ENCODE measurements at regions of chr6 and their contacts with region 1.

Region 1: GRCh38 chr6:139161817-139162284 is 27.0 kb downstream of the HECA start:
- DNase-seq: peak; percentile 91
- H3K4me3 Mint-ChIP-seq: peak overlapping the region; percentile 80
- H3K27ac Mint-ChIP-seq: peak overlapping the region; percentile 98
- H3K4me1 Mint-ChIP-seq: peaks cover 66% of the 10 kb centered on the region
- H3K27me3 Mint-ChIP-seq: no peaks in the 10 kb centered on the region

Region 2: DNA sequence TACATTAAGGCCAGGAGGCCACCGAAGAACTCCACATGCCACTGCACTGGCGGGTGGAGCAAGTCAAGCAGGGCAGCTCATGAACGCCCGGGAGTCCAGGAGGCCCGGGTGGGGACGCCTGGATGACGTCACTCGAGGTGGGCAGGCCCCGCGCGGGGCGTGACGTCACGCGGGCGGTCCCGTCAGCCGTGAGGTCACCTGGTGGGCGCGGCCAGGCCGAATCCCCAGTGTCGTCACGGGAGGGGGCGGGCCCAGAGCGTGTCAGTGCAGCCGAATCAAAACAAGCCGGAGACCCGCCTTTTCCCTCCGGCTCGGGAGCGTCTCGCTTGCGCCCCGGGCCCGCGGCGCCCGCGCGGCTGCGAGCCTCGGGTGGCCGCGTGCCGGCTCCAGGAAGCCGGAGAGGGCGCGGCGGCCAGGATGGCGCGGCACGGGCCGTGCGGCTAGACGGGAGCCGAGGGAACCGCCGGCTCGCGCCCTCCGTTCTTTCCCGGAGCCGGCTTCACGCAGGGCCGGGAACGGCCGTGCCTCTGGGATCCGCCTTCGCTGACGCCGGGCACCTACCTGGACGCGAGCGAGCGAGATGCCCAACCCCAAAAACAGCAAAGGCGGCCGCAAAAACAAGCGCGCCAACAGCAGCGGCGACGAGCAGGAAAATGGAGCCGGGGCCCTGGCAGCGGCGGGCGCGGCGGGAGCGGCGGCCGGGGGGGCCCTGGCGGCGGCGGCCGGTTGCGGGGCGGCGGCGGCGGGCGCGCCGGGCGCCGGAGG is 26.9 kb before region 1 on chr6 and contains the start of gene HECA:
- intact Hi-C with region 1: loop called (anchors 1 kb)
- DNase-seq: peak; percentile 100
- H3K4me3 Mint-ChIP-seq: peak within 1 kb of the TSS; percentile 98
- H3K27ac Mint-ChIP-seq: peak within 1 kb of the TSS; percentile 97
- H3K4me1 Mint-ChIP-seq: peaks cover 60% of the 10 kb centered on the region
- H3K27me3 Mint-ChIP-seq: no peaks in the 10 kb centered on the region
- total RNA-seq, gene HECA: 45.7 and 47.7 TPM in 2 replicates

Region 3: GRCh38 chr6:139146317-139146726 is 15.5 kb before region 1 on chr6:
- intact Hi-C with region 1: loop called (anchors 2 kb)
- DNase-seq: peak; percentile 76
- H3K4me3 Mint-ChIP-seq: peak overlapping the region; percentile 77
- H3K27ac Mint-ChIP-seq: peak overlapping the region; percentile 94
- H3K4me1 Mint-ChIP-seq: peaks cover 84% of the 10 kb centered on the region
- H3K27me3 Mint-ChIP-seq: no peaks in the 10 kb centered on the region

Region 4: DNA sequence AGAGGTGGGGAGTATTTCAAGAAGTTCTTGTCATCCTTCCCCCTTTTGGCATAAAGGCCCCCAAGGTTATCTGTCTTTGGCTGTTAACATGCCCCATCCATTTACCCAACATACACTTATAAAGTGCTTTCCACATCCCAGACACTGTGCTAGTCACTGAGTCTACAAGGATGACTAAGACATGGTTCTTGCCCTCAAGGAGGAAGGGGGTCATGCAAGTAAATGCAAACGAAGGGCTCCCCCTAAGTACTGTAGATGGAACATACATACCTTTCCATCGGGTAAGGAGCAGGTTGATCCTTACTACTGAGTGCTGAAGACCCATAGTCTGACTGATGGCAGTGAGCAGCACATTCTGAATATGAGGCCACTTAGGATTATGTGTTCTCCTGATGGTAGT is 11.3 kb after region 1 on chr6:
- intact Hi-C with region 1: loop called (anchors 1 kb)
- DNase-seq: peak; percentile 61
- H3K4me3 Mint-ChIP-seq: peak overlapping the region; percentile 32
- H3K27ac Mint-ChIP-seq: peak overlapping the region; percentile 79
- H3K4me1 Mint-ChIP-seq: peaks cover 78% of the 10 kb centered on the region
- H3K27me3 Mint-ChIP-seq: no peaks in the 10 kb centered on the region

Region 5: GRCh38 chr6:140789466-140789865 is 1627.6 kb after region 1 on chr6:
- intact Hi-C with region 1: no loop called
- DNase-seq: no peak
- H3K4me3 Mint-ChIP-seq: no peak overlapping the region
- H3K27ac Mint-ChIP-seq: no peak overlapping the region
- H3K4me1 Mint-ChIP-seq: no peaks in the 10 kb centered on the region
- H3K27me3 Mint-ChIP-seq: no peaks in the 10 kb centered on the region